ENCODE measurements at regions of chr11 and their contacts with region 1.

Region 1: GRCh38 chr11:28107748-28108618 is at the starts of genes KIF18A and METTL15:
- DNase-seq: peak; percentile 99
- ATAC-seq: peak; percentile 89
- H3K4me3 ChIP-seq: peak within 1 kb of the TSS; percentile 67
- H3K27ac ChIP-seq: peak within 1 kb of the TSS; percentile 69
- H3K4me1 ChIP-seq: no peaks in the 10 kb centered on the region
- H3K27me3 ChIP-seq: no peaks in the 10 kb centered on the region
- CTCF ChIP-seq: no peak
- POLR2A ChIP-seq: peak; percentile 96
- RAD21 ChIP-seq: peak; percentile 26
- total RNA-seq, gene KIF18A: 24.4 and 37.2 TPM in 2 replicates
- total RNA-seq, gene METTL15: 24.4 and 30.5 TPM in 2 replicates

Region 2: GRCh38 chr11:27705873-27706820 is 401.8 kb before region 1 on chr11:
- CTCF ChIA-PET with region 1: no interaction called
- POLR2A ChIA-PET with region 1: no interaction called
- dilution Hi-C with region 1: no loop called
- in situ Hi-C with region 1: loop called (anchors 10 kb)
- intact Hi-C with region 1: loop called (anchors 1 kb)
- DNase-seq: peak; percentile 64
- ATAC-seq: no peak
- H3K4me3 ChIP-seq: no peak overlapping the region
- H3K27ac ChIP-seq: peak overlapping the region; percentile 63; the same call in 1 of the 2 replicates
- H3K4me1 ChIP-seq: peaks cover 8% of the 10 kb centered on the region
- H3K27me3 ChIP-seq: no peaks in the 10 kb centered on the region
- CTCF ChIP-seq: peak; percentile 48
- POLR2A ChIP-seq: no peak
- RAD21 ChIP-seq: peak; percentile 40

Region 3: GRCh38 chr11:27783701-27784355 is 324.2 kb before region 1 on chr11:
- CTCF ChIA-PET with region 1: no interaction called
- POLR2A ChIA-PET with region 1: no interaction called
- dilution Hi-C with region 1: no loop called
- in situ Hi-C with region 1: no loop called
- intact Hi-C with region 1: loop called (anchors 1 kb)
- DNase-seq: no peak
- ATAC-seq: no peak
- H3K4me3 ChIP-seq: no peak overlapping the region
- H3K27ac ChIP-seq: no peak overlapping the region
- H3K4me1 ChIP-seq: no peaks in the 10 kb centered on the region
- H3K27me3 ChIP-seq: no peaks in the 10 kb centered on the region
- CTCF ChIP-seq: no peak
- POLR2A ChIP-seq: no peak
- RAD21 ChIP-seq: no peak

Region 4: GRCh38 chr11:28058333-28058732 is 49.6 kb before region 1 on chr11:
- CTCF ChIA-PET with region 1: no interaction called
- POLR2A ChIA-PET with region 1: interaction called, 12 read pairs
- dilution Hi-C with region 1: no loop called
- in situ Hi-C with region 1: no loop called
- intact Hi-C with region 1: no loop called
- DNase-seq: peak; percentile 51
- ATAC-seq: peak; percentile 67
- H3K4me3 ChIP-seq: no peak overlapping the region
- H3K27ac ChIP-seq: no peak overlapping the region
- H3K4me1 ChIP-seq: peaks cover 2% of the 10 kb centered on the region; the same call in 1 of the 2 replicates
- H3K27me3 ChIP-seq: no peaks in the 10 kb centered on the region
- CTCF ChIP-seq: no peak
- POLR2A ChIP-seq: no peak
- RAD21 ChIP-seq: no peak

Region 5: GRCh38 chr11:28529540-28530410 is 421.8 kb after region 1 on chr11:
- CTCF ChIA-PET with region 1: no interaction called
- POLR2A ChIA-PET with region 1: no interaction called
- dilution Hi-C with region 1: no loop called
- in situ Hi-C with region 1: no loop called
- intact Hi-C with region 1: loop called (anchors 5 kb)
- DNase-seq: peak; percentile 82
- ATAC-seq: peak; percentile 64
- H3K4me3 ChIP-seq: no peak overlapping the region
- H3K27ac ChIP-seq: peak overlapping the region; percentile 19; the same call in 1 of the 2 replicates
- H3K4me1 ChIP-seq: peaks cover 3% of the 10 kb centered on the region; the same call in 1 of the 2 replicates
- H3K27me3 ChIP-seq: no peaks in the 10 kb centered on the region
- CTCF ChIP-seq: peak; percentile 57
- POLR2A ChIP-seq: no peak
- RAD21 ChIP-seq: peak; percentile 59

Region 6: GRCh38 chr11:28697920-28698827 is 590.2 kb after region 1 on chr11:
- CTCF ChIA-PET with region 1: no interaction called
- POLR2A ChIA-PET with region 1: no interaction called
- dilution Hi-C with region 1: no loop called
- in situ Hi-C with region 1: no loop called
- intact Hi-C with region 1: loop called (anchors 5 kb)
- DNase-seq: peak; percentile 61
- ATAC-seq: peak; percentile 64
- H3K4me3 ChIP-seq: no peak overlapping the region
- H3K27ac ChIP-seq: peak overlapping the region; percentile 11; the same call in 1 of the 2 replicates
- H3K4me1 ChIP-seq: peaks cover 14% of the 10 kb centered on the region
- H3K27me3 ChIP-seq: no peaks in the 10 kb centered on the region
- CTCF ChIP-seq: peak; percentile 78
- POLR2A ChIP-seq: no peak
- RAD21 ChIP-seq: peak; percentile 81

Measured in IMR-90 (cell line).